Lower leg skin (tissue), 4 donors: ENCODE measurements at regions of chr2 and their contacts with region 1.

Region 1: DNA sequence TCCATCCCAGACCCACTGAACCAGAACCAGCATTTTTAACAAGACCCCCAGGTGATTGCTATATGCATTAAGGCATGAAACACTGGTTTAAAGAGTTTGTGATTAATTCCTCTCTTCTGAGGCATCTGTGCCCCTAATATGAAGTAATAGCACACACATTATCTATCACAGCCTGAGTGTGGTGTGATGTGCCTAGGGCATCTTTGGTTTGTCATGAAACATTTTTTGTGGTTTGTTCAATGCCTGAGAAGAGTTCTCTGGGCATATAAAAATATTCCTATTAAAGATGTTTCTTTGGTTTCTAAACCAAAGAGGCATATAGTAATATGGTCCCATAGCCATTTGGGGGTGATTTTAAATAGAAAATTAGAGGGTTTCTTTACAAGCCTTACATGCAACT is 221.7 kb upstream of the SPOPL start:
- DNase-seq: no peak
- H3K4me3 ChIP-seq: no peak overlapping the region
- CTCF ChIP-seq: no peak
- POLR2A ChIP-seq: no peak

Region 2: DNA sequence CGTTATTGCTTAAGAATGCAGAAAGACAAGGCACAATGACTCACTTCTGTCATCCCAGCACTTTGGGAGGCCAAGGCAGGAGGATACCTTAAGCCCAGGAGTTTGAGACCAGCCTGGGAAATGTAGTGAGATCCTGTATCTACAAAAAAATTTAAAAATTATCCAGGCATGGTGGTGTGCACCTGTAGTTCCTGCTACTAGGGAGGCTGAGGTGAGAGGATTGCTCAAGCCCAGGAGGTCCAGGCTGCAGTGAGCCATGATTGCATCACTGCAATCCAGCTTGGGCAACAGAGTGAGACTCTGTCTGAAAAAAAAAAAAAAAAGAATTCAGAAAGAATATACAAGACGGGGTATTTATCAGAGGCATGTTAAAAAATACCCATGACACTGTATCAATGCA is 39.7 kb after region 1 on chr2:
- intact Hi-C with region 1: loop called (anchors 1 kb)
- DNase-seq: no peak
- H3K4me3 ChIP-seq: no peak overlapping the region
- CTCF ChIP-seq: no peak
- POLR2A ChIP-seq: no peak

Region 3: GRCh38 chr2:138615257-138615656 is 335.4 kb after region 1 on chr2:
- intact Hi-C with region 1: no loop called
- DNase-seq: no peak
- H3K4me3 ChIP-seq: no peak overlapping the region
- CTCF ChIP-seq: no peak
- POLR2A ChIP-seq: no peak